HEK293 (cell line): ENCODE measurements at regions of chr6 and their contacts with region 1.

Region 1: DNA sequence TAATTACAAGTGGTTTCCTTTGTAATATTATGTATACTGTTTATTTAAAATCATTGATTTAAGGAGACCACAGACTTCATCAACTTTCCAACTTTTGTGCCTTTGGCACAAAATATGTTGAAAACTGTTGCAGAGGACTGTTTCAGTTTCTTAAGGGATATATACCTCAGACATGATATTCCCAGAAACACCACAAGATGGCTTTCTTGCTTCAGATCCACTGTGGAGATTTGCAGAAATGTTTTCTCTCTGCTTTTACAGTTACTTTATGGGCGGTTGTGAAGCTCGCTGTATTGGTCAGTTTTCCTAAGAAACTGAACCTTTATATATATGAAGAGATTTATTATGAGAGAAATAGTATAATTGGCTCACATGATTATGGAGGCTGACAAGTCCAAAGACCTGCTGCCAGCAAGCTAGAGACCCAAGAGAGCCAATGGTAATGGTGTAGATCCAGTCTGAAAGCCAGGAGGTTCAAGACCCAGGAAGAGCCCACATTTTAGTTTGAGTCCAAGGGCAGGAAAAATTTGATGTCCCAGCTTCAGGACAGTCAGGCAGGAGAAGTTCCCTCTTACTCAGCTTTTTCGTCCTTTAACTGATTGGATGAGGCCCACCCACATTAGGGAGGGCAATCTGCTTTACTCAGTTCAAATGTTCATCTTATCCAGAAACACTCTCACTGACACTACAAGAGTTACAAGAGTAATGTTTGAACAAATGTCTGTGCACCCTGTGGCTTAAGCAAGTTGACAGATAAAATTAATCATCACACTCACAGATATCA is 12.8 kb downstream of the ME1 start:
- H3K4me3 ChIP-seq: no peak overlapping the region
- H3K27ac ChIP-seq: no peak overlapping the region
- H3K4me1 ChIP-seq: no peaks in the 10 kb centered on the region
- CTCF ChIP-seq: no peak

Region 2: DNA sequence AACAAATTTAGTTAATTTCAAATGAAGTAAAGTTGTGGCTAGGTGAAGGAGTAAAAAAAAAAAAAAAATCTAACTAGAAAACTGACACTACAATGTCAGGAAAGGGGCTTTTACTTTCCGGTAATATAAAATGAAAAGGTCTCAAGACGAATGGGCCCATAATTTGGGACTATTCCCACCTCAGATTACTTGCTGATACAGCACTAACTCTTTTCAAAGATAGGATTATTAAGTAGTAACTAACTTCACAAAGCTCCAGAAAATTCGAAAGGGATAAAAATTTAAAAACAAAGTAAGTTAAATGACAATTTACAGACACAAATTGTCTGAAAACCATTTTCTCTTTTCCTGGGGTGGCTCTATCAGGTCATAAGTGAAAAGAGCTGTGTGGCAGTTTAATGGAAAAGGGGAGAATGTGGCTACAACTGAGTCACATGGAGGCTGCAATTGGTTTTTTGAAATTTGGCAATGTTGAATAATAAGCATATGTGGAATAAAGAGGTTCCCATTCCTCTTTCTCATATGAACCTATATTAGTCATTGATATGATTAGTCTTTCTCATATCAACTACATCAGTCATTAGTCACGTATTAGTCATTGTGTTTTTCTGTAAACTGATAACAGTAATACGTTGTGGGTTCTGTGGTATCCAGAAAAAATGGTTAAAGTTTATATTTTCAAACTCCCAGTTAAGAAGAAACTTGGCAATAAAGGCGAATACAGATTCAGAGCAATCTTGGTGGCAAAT is 146.9 kb before region 1 on chr6:
- CTCF ChIA-PET with region 1: no interaction called
- POLR2A ChIA-PET with region 1: no interaction called
- H3K4me3 ChIP-seq: no peak overlapping the region
- H3K27ac ChIP-seq: no peak overlapping the region
- H3K4me1 ChIP-seq: no peaks in the 10 kb centered on the region
- CTCF ChIP-seq: no peak

Region 3: GRCh38 chr6:83430611-83431563 is 12.8 kb after region 1 on chr6 and contains the start of gene ME1:
- CTCF ChIA-PET with region 1: interaction called, 11 read pairs
- POLR2A ChIA-PET with region 1: no interaction called
- H3K4me3 ChIP-seq: peak within 1 kb of the TSS; percentile 83
- H3K27ac ChIP-seq: peak within 1 kb of the TSS; percentile 82
- H3K4me1 ChIP-seq: peaks cover 2% of the 10 kb centered on the region; the same call in 1 of the 2 replicates
- CTCF ChIP-seq: peak; percentile 77

Region 4: GRCh38 chr6:83442752-83443151 is 24.7 kb after region 1 on chr6:
- CTCF ChIA-PET with region 1: no interaction called
- POLR2A ChIA-PET with region 1: no interaction called
- H3K4me3 ChIP-seq: no peak overlapping the region
- H3K27ac ChIP-seq: no peak overlapping the region
- H3K4me1 ChIP-seq: no peaks in the 10 kb centered on the region
- CTCF ChIP-seq: no peak

Region 5: DNA sequence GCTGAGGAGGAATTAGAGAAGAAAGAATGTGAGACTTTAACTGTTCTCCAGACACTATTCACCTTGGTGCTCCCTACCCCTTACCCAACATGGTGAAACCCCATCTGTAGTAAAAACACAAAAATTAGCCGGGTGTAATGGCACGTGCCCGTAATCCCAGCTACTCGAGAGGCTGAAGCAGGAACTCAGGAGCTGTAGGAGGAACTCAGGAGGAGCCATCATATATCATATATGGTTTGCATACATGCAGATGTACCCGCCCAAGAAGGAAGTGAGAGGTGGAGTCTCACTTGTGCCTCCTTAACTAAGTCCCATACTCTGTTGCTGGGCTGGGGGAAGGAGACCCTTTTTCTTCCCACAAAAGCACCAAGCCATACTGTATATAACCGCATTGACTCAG is 48.3 kb after region 1 on chr6:
- CTCF ChIA-PET with region 1: no interaction called
- POLR2A ChIA-PET with region 1: no interaction called
- H3K4me3 ChIP-seq: no peak overlapping the region
- H3K27ac ChIP-seq: no peak overlapping the region
- H3K4me1 ChIP-seq: no peaks in the 10 kb centered on the region
- CTCF ChIP-seq: no peak

Region 6: DNA sequence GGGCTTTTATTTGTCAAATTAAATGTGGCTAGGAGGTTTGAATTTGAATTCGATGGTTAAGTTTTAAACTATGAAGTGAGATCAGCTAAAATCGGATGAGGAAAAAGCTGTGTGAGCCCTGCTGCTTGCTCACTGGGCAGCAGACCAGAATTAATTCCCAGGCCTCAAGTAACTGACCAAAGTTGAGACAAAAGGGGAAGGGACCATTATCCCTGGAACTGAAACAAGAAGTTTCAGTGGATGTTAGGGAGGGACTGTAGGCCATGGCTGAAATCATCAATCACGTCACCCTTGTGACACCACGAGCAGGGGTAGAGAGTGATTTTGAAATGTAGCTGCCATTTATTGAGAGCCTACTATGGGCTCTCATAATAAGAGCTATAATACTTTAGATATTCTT is 87.3 kb after region 1 on chr6:
- CTCF ChIA-PET with region 1: interaction called, 207 read pairs
- POLR2A ChIA-PET with region 1: no interaction called
- H3K4me3 ChIP-seq: no peak overlapping the region
- H3K27ac ChIP-seq: no peak overlapping the region
- H3K4me1 ChIP-seq: no peaks in the 10 kb centered on the region
- CTCF ChIP-seq: no peak

Region 7: GRCh38 chr6:83514866-83515466 is 96.9 kb after region 1 on chr6:
- CTCF ChIA-PET with region 1: interaction called, 207 read pairs
- POLR2A ChIA-PET with region 1: interaction called, 3 read pairs
- H3K4me3 ChIP-seq: no peak overlapping the region
- H3K27ac ChIP-seq: no peak overlapping the region
- H3K4me1 ChIP-seq: no peaks in the 10 kb centered on the region
- CTCF ChIP-seq: peak; percentile 65

Region 8: GRCh38 chr6:83633149-83633548 is 215.1 kb after region 1 on chr6:
- CTCF ChIA-PET with region 1: no interaction called
- POLR2A ChIA-PET with region 1: no interaction called
- H3K4me3 ChIP-seq: no peak overlapping the region
- H3K27ac ChIP-seq: no peak overlapping the region
- H3K4me1 ChIP-seq: no peaks in the 10 kb centered on the region
- CTCF ChIP-seq: no peak